Posterior vena cava (tissue), 2 donors: ENCODE measurements at regions of chr11 and their contacts with region 1.

Region 1: DNA sequence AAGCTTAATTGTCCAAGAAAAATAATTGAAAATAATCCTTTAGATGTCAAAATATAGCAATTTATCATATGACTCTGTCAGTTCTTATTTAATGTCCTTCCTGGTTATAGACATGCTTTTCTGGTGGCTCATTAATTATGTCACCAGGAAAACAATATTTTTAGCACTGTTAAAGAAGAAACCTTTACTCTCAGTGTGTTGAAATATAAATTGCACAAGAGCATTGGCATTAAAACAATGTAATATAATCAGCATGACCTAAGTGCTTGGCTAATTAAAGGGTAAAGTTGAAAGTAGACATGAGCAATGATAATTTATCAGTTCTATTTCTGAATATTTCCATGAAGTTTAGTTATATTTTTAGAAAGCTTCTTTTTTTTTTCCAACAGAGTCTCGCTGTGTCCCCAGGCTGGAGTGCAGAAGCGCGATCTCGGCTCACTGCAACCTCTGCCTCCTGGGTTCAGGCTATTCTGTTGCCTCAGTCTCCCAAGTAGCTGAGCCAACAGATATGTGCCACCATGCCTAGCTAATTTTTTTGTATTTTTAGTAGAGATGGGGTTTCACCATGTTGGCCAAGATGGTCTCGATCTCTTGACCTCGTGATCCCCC is 232.3 kb downstream of the JRKL start:
- DNase-seq: no peak

Region 2: GRCh38 chr11:96543177-96543576 is 79.0 kb before region 1 on chr11:
- intact Hi-C with region 1: no loop called
- DNase-seq: no peak

Region 3: GRCh38 chr11:96635655-96636054 is 13.5 kb after region 1 on chr11:
- intact Hi-C with region 1: loop called in 1 of 2 experiments (anchors 1 kb)
- DNase-seq: peak; percentile 63